GM12878 (cell line): ENCODE measurements at regions of chr1 and their contacts with region 1.

Region 1: GRCh38 chr1:234610348-234611152 is 572 bp upstream of the IRF2BP2 start:
- DNase-seq: peak; percentile 75
- ATAC-seq: peak; percentile 54
- H3K4me3 ChIP-seq: peak overlapping the region; percentile 74
- H3K27ac ChIP-seq: peak overlapping the region; percentile 98
- H3K4me1 ChIP-seq: peaks cover 24% of the 10 kb centered on the region
- H3K27me3 ChIP-seq: no peaks in the 10 kb centered on the region
- CTCF ChIP-seq: no peak
- EP300 ChIP-seq: no peak; a peak in 2 of 4 replicates
- POLR2A ChIP-seq: peak; percentile 97
- RAD21 ChIP-seq: no peak

Region 2: GRCh38 chr1:234499119-234499942 is 111.2 kb before region 1 on chr1:
- CTCF ChIA-PET with region 1: interaction called, 8 read pairs
- POLR2A ChIA-PET with region 1: interaction called, 17 read pairs
- RAD21 ChIA-PET with region 1: interaction called, 32 read pairs
- SMC1A ChIA-PET with region 1: interaction called, 22 read pairs
- in situ Hi-C with region 1: loop called (anchors 5 kb)
- intact Hi-C with region 1: no loop called
- DNase-seq: no peak
- ATAC-seq: peak; percentile 77
- H3K4me3 ChIP-seq: peak overlapping the region; percentile 14
- H3K27ac ChIP-seq: peak overlapping the region; percentile 69
- H3K4me1 ChIP-seq: peaks cover 45% of the 10 kb centered on the region
- H3K27me3 ChIP-seq: no peaks in the 10 kb centered on the region
- CTCF ChIP-seq: peak; percentile 94 to 96 (median 95); a peak in 5 of 6 replicates
- EP300 ChIP-seq: no peak
- POLR2A ChIP-seq: no peak
- RAD21 ChIP-seq: peak; percentile 96

Region 3: DNA sequence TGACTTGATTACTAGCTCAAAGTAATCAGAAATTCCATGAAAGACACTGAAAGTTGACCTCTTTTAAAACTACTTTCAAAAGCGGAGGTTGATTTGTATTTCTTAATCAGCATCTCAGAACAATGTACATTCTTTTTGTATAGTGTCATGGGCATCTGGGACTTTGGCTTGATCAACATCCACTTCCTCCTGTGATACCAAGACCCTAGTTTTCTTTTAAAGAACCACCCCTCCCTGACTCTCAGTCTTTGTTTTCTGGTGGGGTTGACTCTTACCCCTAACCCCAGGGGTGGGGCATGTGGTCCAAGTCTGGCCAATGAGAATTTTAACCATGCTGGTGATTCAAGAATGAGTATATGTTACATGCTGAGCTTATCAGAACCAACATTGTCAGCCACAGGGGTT is 21.2 kb after region 1 on chr1:
- CTCF ChIA-PET with region 1: interaction called, 4 read pairs
- POLR2A ChIA-PET with region 1: no interaction called
- RAD21 ChIA-PET with region 1: no interaction called
- SMC1A ChIA-PET with region 1: interaction called, 13 read pairs
- in situ Hi-C with region 1: no loop called
- intact Hi-C with region 1: no loop called
- DNase-seq: no peak
- ATAC-seq: no peak
- H3K4me3 ChIP-seq: no peak overlapping the region
- H3K27ac ChIP-seq: no peak overlapping the region
- H3K4me1 ChIP-seq: no peaks in the 10 kb centered on the region
- H3K27me3 ChIP-seq: no peaks in the 10 kb centered on the region
- CTCF ChIP-seq: no peak
- EP300 ChIP-seq: no peak
- POLR2A ChIP-seq: no peak
- RAD21 ChIP-seq: no peak

Region 4: GRCh38 chr1:234691567-234691966 is 81.0 kb after region 1 on chr1:
- CTCF ChIA-PET with region 1: interaction called, 4 read pairs
- POLR2A ChIA-PET with region 1: interaction called, 9 read pairs
- RAD21 ChIA-PET with region 1: interaction called, 74 read pairs
- SMC1A ChIA-PET with region 1: interaction called, 29 read pairs
- in situ Hi-C with region 1: no loop called
- intact Hi-C with region 1: no loop called
- DNase-seq: no peak
- ATAC-seq: peak; percentile 19; the same call in 2 of the 3 replicates
- H3K4me3 ChIP-seq: no peak overlapping the region
- H3K27ac ChIP-seq: no peak overlapping the region
- H3K4me1 ChIP-seq: peaks cover 12% of the 10 kb centered on the region
- H3K27me3 ChIP-seq: no peaks in the 10 kb centered on the region
- CTCF ChIP-seq: no peak
- EP300 ChIP-seq: no peak
- POLR2A ChIP-seq: no peak
- RAD21 ChIP-seq: no peak

Region 5: GRCh38 chr1:234730770-234731568 is 120.4 kb after region 1 on chr1:
- CTCF ChIA-PET with region 1: interaction called, 3 read pairs
- POLR2A ChIA-PET with region 1: interaction called, 73 read pairs
- RAD21 ChIA-PET with region 1: interaction called, 128 read pairs
- SMC1A ChIA-PET with region 1: interaction called, 137 read pairs
- in situ Hi-C with region 1: loop called (anchors 5 kb)
- intact Hi-C with region 1: loop called (anchors 1 kb)
- DNase-seq: peak; percentile 68
- ATAC-seq: peak; percentile 80
- H3K4me3 ChIP-seq: peak overlapping the region; percentile 17; the same call in 1 of the 2 replicates
- H3K27ac ChIP-seq: peak overlapping the region; percentile 82
- H3K4me1 ChIP-seq: peaks cover 59% of the 10 kb centered on the region
- H3K27me3 ChIP-seq: no peaks in the 10 kb centered on the region
- CTCF ChIP-seq: peak; percentile 17 to 30 (median 28); a peak in 3 of 6 replicates
- EP300 ChIP-seq: peak; percentile 53 to 57; a peak in 3 of 4 replicates
- POLR2A ChIP-seq: no peak
- RAD21 ChIP-seq: peak; percentile 46; the same call in 1 of the 2 replicates

Region 6: DNA sequence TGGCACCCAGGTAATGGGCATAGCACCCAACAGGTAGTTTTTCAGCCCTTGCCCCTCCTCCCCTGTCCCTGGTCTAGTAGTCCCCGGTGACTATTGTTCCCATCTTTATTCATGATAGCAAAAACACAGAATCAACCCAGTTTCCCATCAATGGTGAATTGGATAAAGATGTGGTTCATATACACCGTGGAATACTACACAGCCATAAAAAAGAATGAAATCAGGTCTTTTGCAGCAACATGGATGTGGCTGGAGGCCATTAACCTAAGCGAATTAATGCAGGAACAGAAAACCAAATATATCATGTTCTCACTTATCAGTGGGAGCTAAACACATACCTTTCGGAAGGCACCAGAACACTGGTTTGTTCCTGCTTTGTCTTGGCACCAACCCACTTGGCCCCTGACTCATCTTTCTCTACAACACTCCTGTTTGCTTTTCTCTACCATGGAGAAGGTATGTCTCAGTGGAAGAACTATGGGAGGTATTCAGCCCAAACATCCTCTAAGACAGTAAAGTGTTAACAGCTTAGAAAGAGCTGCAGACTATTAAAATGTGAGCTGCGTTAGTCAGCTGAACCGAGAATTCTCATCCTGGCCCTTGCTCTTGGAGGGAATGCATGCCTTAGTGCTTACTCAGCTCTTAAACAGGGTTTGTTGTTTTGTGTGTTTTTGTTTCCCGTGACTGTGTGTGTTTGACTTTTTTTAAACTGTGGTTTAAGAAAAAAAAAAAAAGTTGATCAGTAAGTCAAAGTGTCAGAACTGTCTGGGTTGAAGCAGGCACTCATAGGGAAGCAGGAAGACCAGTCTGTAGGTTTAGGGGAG is 315.1 kb after region 1 on chr1:
- CTCF ChIA-PET with region 1: interaction called, 6 read pairs
- POLR2A ChIA-PET with region 1: interaction called, 3 read pairs
- RAD21 ChIA-PET with region 1: interaction called, 17 read pairs
- SMC1A ChIA-PET with region 1: interaction called, 3 read pairs
- in situ Hi-C with region 1: no loop called
- intact Hi-C with region 1: loop called (anchors 2 kb)
- DNase-seq: peak; percentile 40
- ATAC-seq: peak; percentile 1
- H3K4me3 ChIP-seq: peak overlapping the region; percentile 40; the same call in 1 of the 2 replicates
- H3K27ac ChIP-seq: peak overlapping the region; percentile 95
- H3K4me1 ChIP-seq: peaks cover 48% of the 10 kb centered on the region
- H3K27me3 ChIP-seq: no peaks in the 10 kb centered on the region
- CTCF ChIP-seq: no peak
- EP300 ChIP-seq: no peak; a peak in 1 of 4 replicates
- POLR2A ChIP-seq: no peak
- RAD21 ChIP-seq: no peak

Region 7: GRCh38 chr1:234970731-234971476 is 360.4 kb after region 1 on chr1:
- CTCF ChIA-PET with region 1: interaction called, 3 read pairs
- POLR2A ChIA-PET with region 1: interaction called, 14 read pairs
- RAD21 ChIA-PET with region 1: interaction called, 35 read pairs
- SMC1A ChIA-PET with region 1: interaction called, 9 read pairs
- in situ Hi-C with region 1: loop called (anchors 10 kb)
- intact Hi-C with region 1: loop called (anchors 5 kb)
- DNase-seq: no peak
- ATAC-seq: peak; percentile 72
- H3K4me3 ChIP-seq: no peak overlapping the region
- H3K27ac ChIP-seq: peak overlapping the region; percentile 95
- H3K4me1 ChIP-seq: peaks cover 60% of the 10 kb centered on the region
- H3K27me3 ChIP-seq: no peaks in the 10 kb centered on the region
- CTCF ChIP-seq: no peak
- EP300 ChIP-seq: peak in 1 of 2 experiments; percentile 87; a peak in 2 of 4 replicates
- POLR2A ChIP-seq: peak; percentile 31; the same call in 1 of the 2 replicates
- RAD21 ChIP-seq: 0 out of 2 replicates have a peak, but pooled peaks have one; percentile 4